H1 (cell line): ENCODE measurements at regions of chr2 and their contacts with region 1.

Region 1: DNA sequence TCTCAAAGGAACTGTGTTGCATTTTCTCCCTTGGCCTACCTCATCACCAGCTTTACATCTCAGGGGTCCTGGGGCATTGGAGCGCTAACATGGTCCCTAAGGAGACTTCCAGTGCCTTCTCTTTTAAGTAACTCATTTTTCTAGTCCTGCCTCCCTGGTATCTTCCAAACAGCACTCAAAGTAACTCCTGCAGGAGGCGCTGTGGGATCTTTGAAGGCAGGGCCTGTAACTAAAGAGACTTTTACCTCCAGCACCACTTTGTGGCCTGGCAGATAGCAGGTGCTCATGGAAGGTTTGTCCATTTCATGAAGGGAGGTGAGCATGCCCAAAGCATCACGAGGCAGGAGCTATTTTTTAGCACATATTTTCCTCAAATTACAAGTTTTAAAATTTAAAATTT is 411.0 kb upstream of the GYPC start:
- DNase-seq: peak; percentile 51 to 85
- H3K4me3 ChIP-seq: no peak overlapping the region
- H3K27ac ChIP-seq: no peak overlapping the region
- H3K4me1 ChIP-seq: no peaks in the 10 kb centered on the region
- H3K27me3 ChIP-seq: no peaks in the 10 kb centered on the region
- CTCF ChIP-seq: peak; percentile 42 to 97 (median 91)
- EP300 ChIP-seq: no peak
- POLR2A ChIP-seq: no peak
- RAD21 ChIP-seq: peak; percentile 94 to 96

Region 2: GRCh38 chr2:125745514-125745913 is 499.4 kb before region 1 on chr2:
- CTCF ChIA-PET with region 1: interaction called, 12 read pairs
- POLR2A ChIA-PET with region 1: no interaction called
- DNase-seq: peak; percentile 60 to 62
- H3K4me3 ChIP-seq: no peak overlapping the region
- H3K27ac ChIP-seq: no peak overlapping the region
- H3K4me1 ChIP-seq: peaks cover 0 to 3% (median 1%) of the 10 kb centered on the region in 4 experiments; a peak in 2 of 7 replicates
- H3K27me3 ChIP-seq: no peaks in the 10 kb centered on the region
- CTCF ChIP-seq: peak; percentile 50 to 89 (median 80)
- EP300 ChIP-seq: peak in 1 of 2 experiments; percentile 25; a peak in 1 of 3 replicates
- POLR2A ChIP-seq: no peak
- RAD21 ChIP-seq: peak; percentile 97 to 99

Region 3: DNA sequence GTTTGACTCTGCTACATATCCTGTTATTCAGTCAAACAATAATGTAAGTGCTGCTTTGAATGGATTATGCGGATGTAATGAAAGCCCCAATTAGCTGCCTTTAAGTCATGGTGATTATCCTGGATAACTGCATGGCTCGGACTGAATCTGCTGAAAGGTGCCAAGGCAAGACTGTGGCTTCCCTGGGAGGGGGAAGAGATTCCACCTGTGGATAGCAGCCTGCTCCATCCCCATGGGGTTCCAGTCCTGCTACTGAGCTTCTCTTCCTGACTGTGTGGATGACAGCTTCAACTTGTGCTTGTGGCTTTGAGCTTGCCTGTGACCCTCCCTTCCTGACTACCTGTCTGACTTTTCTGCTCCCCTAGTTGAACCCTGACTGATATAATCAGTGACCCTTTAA is 129.0 kb before region 1 on chr2:
- CTCF ChIA-PET with region 1: no interaction called
- POLR2A ChIA-PET with region 1: no interaction called
- DNase-seq: peak in 1 of 2 experiments; percentile 5
- H3K4me3 ChIP-seq: no peak overlapping the region
- H3K27ac ChIP-seq: no peak overlapping the region
- H3K4me1 ChIP-seq: peaks cover 0 to 7% (median 4%) of the 10 kb centered on the region in 4 experiments; a peak in 5 of 7 replicates
- H3K27me3 ChIP-seq: no peaks in the 10 kb centered on the region
- CTCF ChIP-seq: no peak
- EP300 ChIP-seq: no peak
- POLR2A ChIP-seq: no peak
- RAD21 ChIP-seq: no peak

Region 4: GRCh38 chr2:126227250-126227649 is 17.7 kb before region 1 on chr2:
- CTCF ChIA-PET with region 1: interaction called, 13 read pairs
- POLR2A ChIA-PET with region 1: no interaction called
- DNase-seq: no peak
- H3K4me3 ChIP-seq: no peak overlapping the region
- H3K27ac ChIP-seq: no peak overlapping the region
- H3K4me1 ChIP-seq: no peaks in the 10 kb centered on the region
- H3K27me3 ChIP-seq: no peaks in the 10 kb centered on the region
- CTCF ChIP-seq: peak in 2 of 3 experiments; percentile 23 to 63; a peak in 2 of 4 replicates
- EP300 ChIP-seq: no peak
- POLR2A ChIP-seq: no peak
- RAD21 ChIP-seq: peak; percentile 59 to 60

Region 5: GRCh38 chr2:126359494-126359893 is 114.6 kb after region 1 on chr2:
- CTCF ChIA-PET with region 1: interaction called, 13 read pairs
- POLR2A ChIA-PET with region 1: no interaction called
- DNase-seq: no peak
- H3K4me3 ChIP-seq: no peak overlapping the region
- H3K27ac ChIP-seq: no peak overlapping the region
- H3K4me1 ChIP-seq: no peaks in the 10 kb centered on the region
- H3K27me3 ChIP-seq: no peaks in the 10 kb centered on the region
- CTCF ChIP-seq: peak in 2 of 3 experiments; percentile 45 to 65; a peak in 3 of 4 replicates
- EP300 ChIP-seq: no peak
- POLR2A ChIP-seq: no peak
- RAD21 ChIP-seq: peak; percentile 60 to 65

Region 6: GRCh38 chr2:126527836-126528507 is 283.0 kb after region 1 on chr2:
- CTCF ChIA-PET with region 1: interaction called, 18 read pairs
- POLR2A ChIA-PET with region 1: interaction called, 3 read pairs
- DNase-seq: peak; percentile 39 to 79
- H3K4me3 ChIP-seq: no peak overlapping the region
- H3K27ac ChIP-seq: no peak overlapping the region
- H3K4me1 ChIP-seq: no peaks in the 10 kb centered on the region
- H3K27me3 ChIP-seq: no peaks in the 10 kb centered on the region
- CTCF ChIP-seq: peak; percentile 74 to 88 (median 85)
- EP300 ChIP-seq: no peak
- POLR2A ChIP-seq: no peak
- RAD21 ChIP-seq: peak; percentile 87 to 88